ENCODE measurements at regions of chr4 and their contacts with region 1.

Region 1: GRCh38 chr4:23324021-23324690 is 565.7 kb downstream of the PPARGC1A start:
- DNase-seq: no peak
- ATAC-seq: no peak
- H3K4me3 ChIP-seq: no peak overlapping the region
- H3K27ac ChIP-seq: no peak overlapping the region
- H3K4me1 ChIP-seq: no peaks in the 10 kb centered on the region
- H3K27me3 ChIP-seq: no peaks in the 10 kb centered on the region
- CTCF ChIP-seq: no peak

Region 2: GRCh38 chr4:24472514-24473308 is 1148.6 kb after region 1 on chr4:
- CTCF ChIA-PET with region 1: interaction called, 12 read pairs
- POLR2A ChIA-PET with region 1: no interaction called
- in situ Hi-C with region 1: no loop called
- intact Hi-C with region 1: no loop called
- DNase-seq: no peak
- ATAC-seq: peak; percentile 89
- H3K4me3 ChIP-seq: peak overlapping the region; percentile 45 to 49
- H3K27ac ChIP-seq: no peak overlapping the region
- H3K4me1 ChIP-seq: no peaks in the 10 kb centered on the region
- H3K27me3 ChIP-seq: peaks cover 11% of the 10 kb centered on the region
- CTCF ChIP-seq: peak; percentile 88

Measured in Panc1 (cell line).